Activated CD8-positive, alpha-beta T cell treated with anti-CD3 and anti-CD28 coated beads for 36 hours (primary cell): ENCODE measurements at regions of chr14 and their contacts with region 1.

Region 1: GRCh38 chr14:61525293-61526011 is 169.9 kb upstream of the HIF1A start:
- DNase-seq: peak; percentile 89
- ATAC-seq: peak; percentile 77
- H3K4me3 Mint-ChIP-seq: peak overlapping the region; percentile 43
- H3K27ac Mint-ChIP-seq: peak overlapping the region; percentile 87
- H3K4me1 Mint-ChIP-seq: peaks cover 88% of the 10 kb centered on the region
- H3K27me3 Mint-ChIP-seq: no peaks in the 10 kb centered on the region
- CTCF ChIP-seq: no peak

Region 2: DNA sequence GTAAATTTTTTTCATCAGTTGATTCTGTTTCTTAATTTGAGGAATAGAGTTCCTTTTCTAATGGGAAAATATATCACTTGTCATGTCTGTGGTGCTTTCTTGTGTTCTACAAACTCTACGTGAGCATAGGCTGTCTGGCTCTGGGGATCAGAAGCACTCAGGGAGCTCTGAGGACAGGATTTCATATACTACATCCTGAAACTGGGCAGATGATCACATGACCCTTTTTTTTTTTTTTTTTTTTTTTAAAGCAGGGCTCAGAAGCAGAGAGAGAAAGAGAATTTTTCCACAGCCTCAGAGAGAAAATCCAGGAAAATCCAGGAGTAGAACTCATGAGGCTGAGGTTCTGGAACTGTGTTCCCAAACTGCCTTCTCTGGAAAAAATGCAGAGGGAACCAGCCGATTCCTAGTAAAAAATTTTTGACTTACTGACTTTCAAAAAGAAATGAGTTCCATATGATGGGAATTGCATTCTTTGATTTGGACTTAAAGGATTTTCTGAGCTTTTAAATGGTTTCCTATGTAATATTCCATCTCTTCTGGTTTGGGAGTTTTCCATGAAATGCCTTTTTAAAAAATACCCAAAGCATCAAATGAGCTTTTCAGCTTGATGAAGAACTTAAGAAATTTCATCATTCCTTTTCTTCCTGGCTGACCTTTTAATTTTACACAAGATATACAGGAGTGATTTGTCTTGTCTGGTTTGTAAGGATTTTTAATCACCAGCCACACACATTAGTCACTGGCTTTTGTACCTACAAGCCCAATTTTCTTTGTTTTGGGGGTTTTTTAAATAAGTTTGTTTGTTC is 13.2 kb before region 1 on chr14:
- CTCF ChIA-PET with region 1: interaction called, 39 read pairs
- POLR2A ChIA-PET with region 1: interaction called, 5 read pairs
- intact Hi-C with region 1: no loop called
- DNase-seq: no peak
- ATAC-seq: peak; percentile 50
- H3K4me3 Mint-ChIP-seq: peak overlapping the region; percentile 52
- H3K27ac Mint-ChIP-seq: peak overlapping the region; percentile 93
- H3K4me1 Mint-ChIP-seq: peaks cover 94% of the 10 kb centered on the region
- H3K27me3 Mint-ChIP-seq: no peaks in the 10 kb centered on the region
- CTCF ChIP-seq: no peak

Region 3: DNA sequence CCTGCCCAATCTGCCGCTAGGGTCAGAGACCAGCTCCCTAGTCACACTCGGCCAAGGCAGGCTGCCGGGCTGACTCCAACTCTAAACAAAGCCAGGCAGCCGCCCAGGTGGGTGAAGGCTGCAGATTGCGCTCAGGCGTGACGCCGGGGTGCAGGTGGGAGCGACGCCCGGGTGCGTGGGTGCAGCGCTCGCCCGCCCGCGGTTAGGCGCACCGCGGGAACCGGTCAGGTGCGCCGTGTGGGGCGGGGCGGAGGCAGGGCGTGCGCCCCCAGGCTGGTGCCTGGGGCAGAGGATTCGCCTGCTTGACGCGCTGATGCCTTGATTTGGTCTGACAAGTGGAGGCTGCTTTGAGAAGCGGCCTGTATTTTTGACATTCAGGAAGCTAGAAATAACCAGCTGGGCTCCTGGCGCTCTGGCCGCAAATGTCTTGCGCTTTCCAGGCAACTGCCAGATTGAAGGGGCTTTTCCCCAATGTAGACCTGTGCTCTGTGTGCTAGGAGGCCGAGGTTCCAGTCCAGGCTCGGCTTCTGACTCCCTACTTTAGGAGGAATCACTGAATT is 43.2 kb after region 1 on chr14:
- CTCF ChIA-PET with region 1: interaction called, 3 read pairs
- POLR2A ChIA-PET with region 1: interaction called, 3 read pairs
- intact Hi-C with region 1: loop called (anchors 5 kb)
- DNase-seq: peak; percentile 72
- ATAC-seq: peak; percentile 56
- H3K4me3 Mint-ChIP-seq: peak overlapping the region; percentile 52
- H3K27ac Mint-ChIP-seq: peak overlapping the region; percentile 78
- H3K4me1 Mint-ChIP-seq: peaks cover 69% of the 10 kb centered on the region
- H3K27me3 Mint-ChIP-seq: no peaks in the 10 kb centered on the region
- CTCF ChIP-seq: no peak

Region 4: DNA sequence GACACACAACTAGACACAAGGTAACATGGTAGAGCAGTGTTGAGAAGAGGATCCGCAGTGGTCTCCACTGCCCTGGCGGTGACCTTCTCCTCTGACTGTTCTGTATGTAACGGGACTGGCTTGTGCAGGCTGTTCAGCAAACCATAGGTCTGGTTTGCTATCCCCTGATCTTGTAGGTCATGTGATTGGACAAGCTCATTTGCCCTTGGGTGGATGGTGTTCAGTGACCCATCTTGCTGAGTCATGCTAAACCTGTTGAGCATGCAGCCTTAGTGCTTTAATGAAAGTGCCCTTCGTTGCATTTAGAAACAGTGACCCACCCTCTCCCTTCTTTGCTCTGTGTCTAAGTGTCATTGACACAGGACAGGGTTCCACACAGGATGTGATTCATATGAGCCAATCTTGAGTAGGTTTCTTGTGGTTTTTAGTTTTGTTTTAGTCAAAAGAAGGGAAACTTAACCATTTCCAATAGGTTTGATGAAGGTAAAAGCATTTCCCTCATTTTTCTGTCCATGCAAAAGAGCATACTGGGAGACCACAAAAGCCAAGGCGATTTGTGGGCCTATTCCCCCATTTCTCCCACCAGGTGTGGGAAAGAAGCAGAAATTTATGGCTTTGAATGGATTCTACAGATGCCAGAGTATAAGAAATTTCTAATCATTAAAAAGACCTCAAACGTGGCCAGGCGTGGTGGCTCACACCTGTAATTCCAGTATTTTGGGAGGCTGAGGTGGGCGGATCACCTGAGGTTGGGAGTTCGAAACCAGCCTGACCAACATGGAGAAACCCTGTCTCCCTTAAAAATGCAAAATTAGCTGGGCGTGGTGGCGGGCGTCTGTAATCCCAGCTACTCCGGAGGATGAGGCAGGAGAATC is 137.2 kb after region 1 on chr14:
- CTCF ChIA-PET with region 1: no interaction called
- POLR2A ChIA-PET with region 1: interaction called, 4 read pairs
- intact Hi-C with region 1: loop called (anchors 5 kb)
- DNase-seq: peak; percentile 81
- ATAC-seq: peak; percentile 85
- H3K4me3 Mint-ChIP-seq: peak overlapping the region; percentile 51
- H3K27ac Mint-ChIP-seq: peak overlapping the region; percentile 97
- H3K4me1 Mint-ChIP-seq: peaks cover 61% of the 10 kb centered on the region
- H3K27me3 Mint-ChIP-seq: no peaks in the 10 kb centered on the region
- CTCF ChIP-seq: no peak